Mammary epithelial cell (primary cell): ENCODE measurements at regions of chr14 and their contacts with region 1.

Region 1: GRCh38 chr14:56491299-56492285 is 88.0 kb upstream of the TMEM260 start:
- DNase-seq: peak; percentile 42
- H3K4me3 ChIP-seq: no peak overlapping the region
- H3K27ac ChIP-seq: no peak overlapping the region
- H3K4me1 ChIP-seq: peaks cover 16% of the 10 kb centered on the region
- H3K27me3 ChIP-seq: no peaks in the 10 kb centered on the region
- CTCF ChIP-seq: peak; percentile 60 to 76

Region 2: GRCh38 chr14:55438066-55438683 is 1053.4 kb before region 1 on chr14:
- CTCF ChIA-PET with region 1: no interaction called
- dilution Hi-C with region 1: no loop called
- in situ Hi-C with region 1: loop called in 1 of 2 experiments (anchors 25 kb)
- intact Hi-C with region 1: loop called (anchors 2 kb)
- DNase-seq: peak; percentile 42
- H3K4me3 ChIP-seq: no peak overlapping the region
- H3K27ac ChIP-seq: no peak overlapping the region
- H3K4me1 ChIP-seq: no peaks in the 10 kb centered on the region
- H3K27me3 ChIP-seq: no peaks in the 10 kb centered on the region
- CTCF ChIP-seq: peak; percentile 67 to 70

Region 3: GRCh38 chr14:55446218-55446654 is 1045.4 kb before region 1 on chr14:
- CTCF ChIA-PET with region 1: no interaction called
- dilution Hi-C with region 1: no loop called
- in situ Hi-C with region 1: loop called in 1 of 2 experiments (anchors 25 kb)
- intact Hi-C with region 1: no loop called
- DNase-seq: peak; percentile 67
- H3K4me3 ChIP-seq: no peak overlapping the region
- H3K27ac ChIP-seq: peak overlapping the region; percentile 56
- H3K4me1 ChIP-seq: peaks cover 33% of the 10 kb centered on the region
- H3K27me3 ChIP-seq: no peaks in the 10 kb centered on the region
- CTCF ChIP-seq: peak; percentile 53 to 74

Region 4: DNA sequence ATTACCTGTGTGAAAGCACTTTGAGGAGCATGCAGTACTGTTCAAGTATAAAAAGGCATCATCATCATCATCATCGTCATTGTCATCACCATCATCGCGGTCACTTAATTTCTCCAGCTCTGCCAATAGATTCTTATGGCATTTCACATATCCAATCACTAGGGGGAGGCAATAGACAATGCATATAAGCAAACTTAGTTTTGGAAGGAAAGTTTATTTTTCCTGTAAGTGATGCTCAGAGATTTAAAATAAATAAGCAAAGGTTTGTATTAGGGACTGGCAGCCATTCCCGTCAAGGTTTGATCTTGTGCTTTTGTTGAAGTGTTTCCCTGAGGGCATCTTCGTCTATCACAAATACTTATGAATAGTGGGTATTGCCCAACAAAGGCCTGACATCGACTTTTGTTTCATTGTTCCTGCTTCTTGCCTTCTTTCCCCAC is 784.2 kb before region 1 on chr14:
- CTCF ChIA-PET with region 1: interaction called, 7 read pairs
- dilution Hi-C with region 1: no loop called
- in situ Hi-C with region 1: loop called in 1 of 2 experiments (anchors 25 kb)
- intact Hi-C with region 1: no loop called
- DNase-seq: peak; percentile 47
- H3K4me3 ChIP-seq: no peak overlapping the region
- H3K27ac ChIP-seq: no peak overlapping the region
- H3K4me1 ChIP-seq: peaks cover 18% of the 10 kb centered on the region
- H3K27me3 ChIP-seq: no peaks in the 10 kb centered on the region
- CTCF ChIP-seq: peak; percentile 69 to 73

Region 5: GRCh38 chr14:55976219-55976618 is 515.4 kb before region 1 on chr14:
- CTCF ChIA-PET with region 1: no interaction called
- dilution Hi-C with region 1: no loop called
- in situ Hi-C with region 1: no loop called
- intact Hi-C with region 1: no loop called
- DNase-seq: no peak
- H3K4me3 ChIP-seq: no peak overlapping the region
- H3K27ac ChIP-seq: no peak overlapping the region
- H3K4me1 ChIP-seq: no peaks in the 10 kb centered on the region
- H3K27me3 ChIP-seq: no peaks in the 10 kb centered on the region
- CTCF ChIP-seq: no peak

Region 6: DNA sequence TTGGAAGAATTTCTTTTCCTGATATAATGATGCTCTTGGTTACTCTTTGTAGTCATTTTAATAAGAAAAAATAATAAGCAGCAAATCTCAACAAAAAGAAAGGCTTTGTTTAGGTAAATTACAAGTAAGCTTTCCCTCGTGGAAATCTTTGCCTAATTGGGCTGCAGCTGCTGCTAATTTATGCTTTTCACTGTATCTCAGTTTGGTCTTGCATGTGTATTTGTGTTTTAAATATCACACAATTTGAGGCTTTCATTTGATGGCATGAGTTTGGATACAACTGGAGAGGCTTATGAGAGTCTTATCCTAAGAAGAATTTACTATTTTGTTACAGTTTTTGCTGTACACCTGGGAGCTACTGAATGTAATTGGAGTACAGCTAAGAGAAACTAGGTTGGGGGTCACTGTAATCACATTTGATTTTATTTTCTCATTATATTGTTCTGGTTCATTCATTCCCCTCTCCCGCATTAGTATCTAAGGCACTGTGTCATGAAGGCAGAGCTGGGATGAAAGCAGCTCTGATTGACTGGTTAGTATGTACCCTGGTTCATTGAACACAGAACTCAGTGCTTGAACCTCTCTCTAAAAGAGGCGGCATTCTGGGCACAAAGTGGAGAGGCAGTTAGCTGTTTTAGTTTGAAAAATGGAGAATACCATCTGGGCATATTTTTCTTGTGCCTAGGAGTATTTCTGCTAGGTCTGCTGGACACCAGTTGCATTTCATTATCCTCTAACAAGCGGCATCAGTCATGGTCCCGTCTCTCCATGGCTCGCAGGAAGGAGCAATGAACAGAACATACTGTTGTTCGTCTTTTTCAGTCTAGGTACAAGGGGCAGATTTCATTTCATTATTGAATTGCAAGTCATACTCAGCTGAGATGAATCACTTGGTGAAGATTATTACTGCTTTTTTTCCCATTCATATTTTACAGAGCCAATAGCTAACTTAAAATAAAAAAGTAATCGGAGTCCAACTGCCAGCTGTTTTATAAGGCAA is 30.0 kb before region 1 on chr14:
- CTCF ChIA-PET with region 1: no interaction called
- dilution Hi-C with region 1: no loop called
- in situ Hi-C with region 1: no loop called
- intact Hi-C with region 1: no loop called
- DNase-seq: no peak
- H3K4me3 ChIP-seq: no peak overlapping the region
- H3K27ac ChIP-seq: no peak overlapping the region
- H3K4me1 ChIP-seq: no peaks in the 10 kb centered on the region
- H3K27me3 ChIP-seq: no peaks in the 10 kb centered on the region
- CTCF ChIP-seq: no peak

Region 7: DNA sequence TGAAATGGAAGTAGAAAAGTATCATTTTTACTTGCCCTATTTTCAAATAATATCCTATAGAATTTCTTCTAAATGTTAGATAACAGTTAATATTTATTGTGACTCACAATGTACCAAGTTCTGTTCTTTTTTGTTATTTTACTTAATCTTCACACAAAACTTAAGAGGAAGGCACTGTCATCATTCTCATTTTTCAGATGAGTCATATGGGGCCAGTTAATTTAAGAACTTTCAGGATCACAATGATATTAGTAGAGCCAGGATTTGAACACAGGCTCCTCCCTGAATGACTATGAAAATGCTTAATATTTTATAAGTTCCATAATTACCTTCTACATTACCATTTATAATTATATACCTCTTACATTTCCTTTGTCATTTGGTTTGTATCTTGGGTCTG is 77.6 kb after region 1 on chr14:
- CTCF ChIA-PET with region 1: no interaction called
- dilution Hi-C with region 1: no loop called
- in situ Hi-C with region 1: no loop called
- intact Hi-C with region 1: no loop called
- DNase-seq: no peak
- H3K4me3 ChIP-seq: no peak overlapping the region
- H3K27ac ChIP-seq: no peak overlapping the region
- H3K4me1 ChIP-seq: no peaks in the 10 kb centered on the region
- H3K27me3 ChIP-seq: peaks cover 2% of the 10 kb centered on the region
- CTCF ChIP-seq: no peak

Region 8: GRCh38 chr14:56659964-56660551 is 168.5 kb after region 1 on chr14:
- CTCF ChIA-PET with region 1: no interaction called
- dilution Hi-C with region 1: no loop called
- in situ Hi-C with region 1: no loop called
- intact Hi-C with region 1: loop called (anchors 5 kb)
- DNase-seq: peak; percentile 27
- H3K4me3 ChIP-seq: no peak overlapping the region
- H3K27ac ChIP-seq: no peak overlapping the region
- H3K4me1 ChIP-seq: no peaks in the 10 kb centered on the region
- H3K27me3 ChIP-seq: no peaks in the 10 kb centered on the region
- CTCF ChIP-seq: peak; percentile 80 to 86

Region 9: GRCh38 chr14:57182760-57183503 is 691.3 kb after region 1 on chr14:
- CTCF ChIA-PET with region 1: interaction called, 3 read pairs
- dilution Hi-C with region 1: no loop called
- in situ Hi-C with region 1: no loop called
- intact Hi-C with region 1: loop called (anchors 2 kb)
- DNase-seq: peak; percentile 2
- H3K4me3 ChIP-seq: no peak overlapping the region
- H3K27ac ChIP-seq: no peak overlapping the region
- H3K4me1 ChIP-seq: no peaks in the 10 kb centered on the region
- H3K27me3 ChIP-seq: peaks cover 1% of the 10 kb centered on the region
- CTCF ChIP-seq: peak; percentile 41 to 51

Region 10: DNA sequence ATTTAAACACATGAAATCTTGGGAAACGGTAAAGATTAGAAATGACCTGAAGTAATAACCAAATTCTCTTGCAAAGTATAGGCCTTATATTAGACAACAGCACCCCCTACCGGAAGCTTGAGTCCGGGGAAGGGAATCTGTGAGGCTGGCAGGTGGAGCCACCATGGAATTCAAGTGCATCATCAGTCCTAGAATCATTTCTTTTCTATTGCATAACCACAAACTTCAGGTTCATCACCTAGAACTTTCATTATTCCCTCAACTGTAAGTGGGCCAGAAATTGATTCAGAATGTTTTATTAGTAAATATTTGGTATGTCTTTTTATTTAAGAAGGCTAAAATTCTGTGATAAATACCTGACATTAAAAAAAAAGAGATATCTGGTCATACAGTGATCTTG is 825.7 kb after region 1 on chr14:
- CTCF ChIA-PET with region 1: no interaction called
- dilution Hi-C with region 1: no loop called
- in situ Hi-C with region 1: no loop called
- intact Hi-C with region 1: loop called (anchors 1 kb)
- DNase-seq: peak; percentile 67
- H3K4me3 ChIP-seq: no peak overlapping the region
- H3K27ac ChIP-seq: no peak overlapping the region
- H3K4me1 ChIP-seq: no peaks in the 10 kb centered on the region
- H3K27me3 ChIP-seq: no peaks in the 10 kb centered on the region
- CTCF ChIP-seq: peak; percentile 83 to 88